Spleen (tissue), 13 donors: ENCODE measurements at regions of chr11 and their contacts with region 1.

Region 1: GRCh38 chr11:1652771-1653540 is 23.4 kb downstream of the KRTAP5-5 start:
- DNase-seq: peak; percentile 95
- H3K4me3 ChIP-seq: peak overlapping the region in 1 of 8 donors; percentile 26
- H3K27ac ChIP-seq: no peak overlapping the region
- H3K4me1 ChIP-seq: peaks cover 5 to 34% (median 23%) of the 10 kb centered on the region in 6 donors
- H3K27me3 ChIP-seq: peaks cover 0 to 43% (median 4%) of the 10 kb centered on the region in 7 donors
- CTCF ChIP-seq: peak; percentile 93 to 99 (median 97)
- POLR2A ChIP-seq: no peak

Region 2: DNA sequence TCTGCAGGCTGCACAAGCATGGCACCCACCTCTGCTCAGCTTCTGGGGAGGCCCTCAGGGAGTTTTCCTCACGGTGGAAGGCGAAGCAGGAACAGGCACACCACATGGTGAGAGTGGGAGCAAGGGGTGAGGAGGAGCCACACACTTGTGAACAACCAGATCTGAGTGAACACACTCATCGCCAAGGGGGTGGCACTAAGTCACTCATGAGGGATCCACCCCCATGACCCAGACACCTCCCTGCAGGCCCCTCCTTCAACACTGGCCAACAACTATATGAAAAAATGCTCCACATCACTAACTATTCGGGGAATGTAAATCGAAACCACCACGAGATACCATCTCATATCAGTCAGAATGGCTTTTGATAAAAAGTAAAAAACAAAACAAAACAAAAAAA is 54.1 kb before region 1 on chr11:
- intact Hi-C with region 1: no loop called
- DNase-seq: peak; percentile 25
- H3K4me3 ChIP-seq: no peak overlapping the region
- H3K27ac ChIP-seq: no peak overlapping the region
- H3K4me1 ChIP-seq: peaks cover 0 to 19% (median 6%) of the 10 kb centered on the region in 6 donors
- H3K27me3 ChIP-seq: peaks cover 0 to 70% (median 0%) of the 10 kb centered on the region in 7 donors
- CTCF ChIP-seq: no peak
- POLR2A ChIP-seq: no peak

Region 3: GRCh38 chr11:1694064-1694845 is 41.3 kb after region 1 on chr11:
- intact Hi-C with region 1: loop called (anchors 5 kb)
- DNase-seq: peak; percentile 98
- H3K4me3 ChIP-seq: peak overlapping the region in 4 of 8 donors; percentile 7 to 58 (median 19)
- H3K27ac ChIP-seq: peak overlapping the region in 5 of 8 donors; percentile 17 to 66 (median 48)
- H3K4me1 ChIP-seq: peaks cover 10 to 27% (median 19%) of the 10 kb centered on the region in 6 donors
- H3K27me3 ChIP-seq: peaks cover 0 to 30% (median 4%) of the 10 kb centered on the region in 7 donors
- CTCF ChIP-seq: peak; percentile 89 to 99 (median 95)
- POLR2A ChIP-seq: no peak

Region 4: DNA sequence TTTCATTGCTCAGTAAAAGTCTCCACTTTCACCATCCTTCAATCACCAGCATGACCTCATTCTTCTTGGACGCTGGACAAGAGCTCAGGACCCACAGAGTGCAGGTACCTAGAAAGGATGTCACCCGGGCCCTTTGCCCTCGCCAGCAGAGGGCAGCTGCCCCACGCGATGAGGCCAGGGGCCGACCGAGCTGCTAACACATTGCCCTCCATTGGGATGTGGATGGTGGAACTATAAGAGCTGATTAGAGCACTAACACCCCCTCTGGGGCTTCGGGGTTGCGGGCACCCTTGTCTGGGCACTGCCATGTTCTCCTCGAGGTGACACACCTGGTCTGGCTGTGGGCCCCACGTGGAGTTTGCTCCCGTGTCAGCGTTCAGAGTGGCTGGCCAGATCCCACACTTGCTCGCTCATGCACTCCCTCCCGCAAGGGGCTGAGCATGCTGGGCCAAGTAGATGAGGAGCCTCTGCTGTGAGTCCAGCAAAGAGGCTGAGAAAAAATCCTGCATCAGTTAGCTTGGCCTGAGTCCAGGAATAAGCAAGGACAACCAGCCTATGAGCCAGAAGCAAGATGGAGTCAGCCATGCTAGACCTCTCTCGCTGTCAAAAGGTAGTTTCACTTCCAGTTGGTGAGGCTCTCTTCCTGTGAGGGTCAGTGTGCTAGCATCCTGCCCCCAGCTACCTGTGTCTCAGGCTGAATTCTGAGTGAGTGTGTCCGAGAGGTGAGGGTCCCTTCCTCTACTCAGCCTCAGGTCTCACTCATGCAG is 53.9 kb after region 1 on chr11:
- intact Hi-C with region 1: no loop called
- DNase-seq: peak; percentile 76
- H3K4me3 ChIP-seq: no peak overlapping the region
- H3K27ac ChIP-seq: no peak overlapping the region
- H3K4me1 ChIP-seq: peaks cover 0 to 16% (median 5%) of the 10 kb centered on the region in 6 donors
- H3K27me3 ChIP-seq: no peaks in the 10 kb centered on the region
- CTCF ChIP-seq: peak in 5 of 11 experiments; percentile 11 to 44 (median 31)
- POLR2A ChIP-seq: no peak

Region 5: GRCh38 chr11:1832211-1832919 is 179.4 kb after region 1 on chr11:
- intact Hi-C with region 1: loop called (anchors 5 kb)
- DNase-seq: peak; percentile 92
- H3K4me3 ChIP-seq: peak overlapping the region in 3 of 8 donors; percentile 7 to 57 (median 25)
- H3K27ac ChIP-seq: peak overlapping the region in 2 of 8 donors; percentile 4 to 50
- H3K4me1 ChIP-seq: peaks cover 4 to 41% (median 17%) of the 10 kb centered on the region in 6 donors
- H3K27me3 ChIP-seq: peaks cover 0 to 53% (median 0%) of the 10 kb centered on the region in 7 donors
- CTCF ChIP-seq: peak; percentile 83 to 99 (median 97)
- POLR2A ChIP-seq: no peak

Region 6: GRCh38 chr11:2151500-2152257 is 498.7 kb after region 1 on chr11:
- intact Hi-C with region 1: loop called (anchors 10 kb)
- DNase-seq: peak; percentile 88
- H3K4me3 ChIP-seq: peak overlapping the region in 1 of 8 donors; percentile 40
- H3K27ac ChIP-seq: peak overlapping the region in 3 of 8 donors; percentile 8 to 41 (median 40)
- H3K4me1 ChIP-seq: peaks cover 7 to 13% (median 9%) of the 10 kb centered on the region in 6 donors
- H3K27me3 ChIP-seq: peaks cover 0 to 72% (median 30%) of the 10 kb centered on the region in 7 donors
- CTCF ChIP-seq: peak; percentile 62 to 92 (median 85)
- POLR2A ChIP-seq: no peak